Activated CD8-positive, alpha-beta memory T cell treated with anti-CD3 and anti-CD28 coated beads, Interleukin-2, amount 10 ng/mL, durations not matched to agents 7 days and 5 days (primary cell): ENCODE measurements at regions of chr11 and their contacts with region 1.

Region 1: GRCh38 chr11:62394825-62395538 is 23.9 kb upstream of the SCGB1A1 start:
- DNase-seq: peak; percentile 71
- ATAC-seq: peak; percentile 90
- H3K4me3 Mint-ChIP-seq: no peak overlapping the region
- H3K27ac Mint-ChIP-seq: no peak overlapping the region
- H3K4me1 Mint-ChIP-seq: peaks cover 6% of the 10 kb centered on the region
- H3K27me3 Mint-ChIP-seq: peaks cover 13% of the 10 kb centered on the region

Region 2: GRCh38 chr11:62406034-62406433 is 11.1 kb after region 1 on chr11:
- CTCF ChIA-PET with region 1: interaction called, 15 read pairs
- DNase-seq: no peak
- ATAC-seq: no peak
- H3K4me3 Mint-ChIP-seq: no peak overlapping the region
- H3K27ac Mint-ChIP-seq: no peak overlapping the region
- H3K4me1 Mint-ChIP-seq: peaks cover 18% of the 10 kb centered on the region
- H3K27me3 Mint-ChIP-seq: no peaks in the 10 kb centered on the region

Region 3: GRCh38 chr11:62542750-62543567 is 148.0 kb after region 1 on chr11:
- CTCF ChIA-PET with region 1: interaction called, 69 read pairs
- DNase-seq: peak; percentile 89
- ATAC-seq: peak; percentile 37
- H3K4me3 Mint-ChIP-seq: peak overlapping the region; percentile 98
- H3K27ac Mint-ChIP-seq: peak overlapping the region; percentile 89
- H3K4me1 Mint-ChIP-seq: peaks cover 70% of the 10 kb centered on the region
- H3K27me3 Mint-ChIP-seq: peaks cover 6% of the 10 kb centered on the region

Region 4: DNA sequence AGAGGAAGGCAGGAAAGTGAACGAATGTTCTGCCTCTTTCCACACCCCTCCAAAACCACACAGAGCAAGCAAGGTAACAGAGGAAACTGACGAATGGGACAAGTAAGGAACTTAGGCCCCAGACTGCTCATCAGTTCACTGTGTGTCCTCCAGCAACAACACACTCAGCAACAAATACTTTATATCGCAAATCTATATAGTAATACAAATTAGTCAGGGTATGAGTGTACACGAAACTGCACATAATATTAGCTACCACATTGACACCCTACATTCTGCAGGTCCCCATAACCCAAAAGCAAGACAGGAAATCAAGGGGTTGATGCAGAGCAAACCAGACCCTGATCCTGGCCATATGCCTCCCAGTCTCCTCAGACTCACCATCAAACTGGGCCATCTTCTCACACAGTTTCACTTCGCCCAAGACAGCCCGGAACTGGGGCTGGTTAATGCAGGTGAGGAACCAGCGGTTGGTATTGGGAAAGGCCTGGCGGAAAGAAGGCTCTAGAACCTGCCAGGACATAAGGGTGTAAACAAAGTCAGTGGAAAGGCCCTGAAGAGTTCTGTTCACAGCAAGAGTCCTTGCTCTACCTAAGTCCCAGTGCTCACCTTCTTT is 172.1 kb after region 1 on chr11:
- CTCF ChIA-PET with region 1: interaction called, 15 read pairs
- DNase-seq: no peak
- ATAC-seq: peak; percentile 54
- H3K4me3 Mint-ChIP-seq: no peak overlapping the region
- H3K27ac Mint-ChIP-seq: peak overlapping the region; percentile 86
- H3K4me1 Mint-ChIP-seq: peaks cover 67% of the 10 kb centered on the region
- H3K27me3 Mint-ChIP-seq: no peaks in the 10 kb centered on the region